ENCODE measurements at regions of chr2 and their contacts with region 1.

Region 1: GRCh38 chr2:189092936-189093335 is 86.6 kb downstream of the COL5A2 start:
- DNase-seq: no peak
- H3K4me3 Mint-ChIP-seq: no peak overlapping the region
- H3K27ac Mint-ChIP-seq: no peak overlapping the region
- H3K4me1 Mint-ChIP-seq: peaks cover 10% of the 10 kb centered on the region
- H3K27me3 Mint-ChIP-seq: no peaks in the 10 kb centered on the region

Region 2: DNA sequence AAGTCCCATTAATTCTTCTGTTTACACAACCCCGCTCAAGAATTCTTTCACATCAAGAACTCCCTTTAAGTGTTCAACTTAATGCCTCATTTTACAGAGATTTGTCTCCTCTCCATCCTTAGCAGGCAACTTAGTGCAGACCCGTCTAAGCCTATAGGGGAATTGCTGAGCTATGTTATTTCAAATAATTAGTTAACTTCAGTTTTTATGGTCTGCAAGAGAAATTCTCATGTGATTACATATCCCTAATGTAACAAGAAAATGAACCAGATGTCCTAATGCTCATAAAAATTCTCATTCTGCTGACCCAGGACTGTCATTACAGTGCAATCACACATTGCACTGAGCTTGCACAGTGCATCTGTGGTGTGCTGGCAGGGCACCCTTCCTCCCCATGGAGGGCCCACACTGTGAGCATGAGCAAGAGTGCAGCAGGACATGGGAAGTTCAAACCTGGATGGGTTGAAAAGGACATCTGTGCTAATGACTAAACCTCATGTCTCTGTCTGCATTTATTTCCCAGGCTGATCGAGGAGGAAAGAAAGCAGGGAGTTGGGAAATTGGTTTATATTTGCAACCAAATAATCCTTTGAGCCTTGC is 10.5 kb before region 1 on chr2:
- CTCF ChIA-PET with region 1: interaction called, 11 read pairs
- POLR2A ChIA-PET with region 1: no interaction called
- DNase-seq: no peak
- H3K4me3 Mint-ChIP-seq: no peak overlapping the region
- H3K27ac Mint-ChIP-seq: no peak overlapping the region
- H3K4me1 Mint-ChIP-seq: no peaks in the 10 kb centered on the region
- H3K27me3 Mint-ChIP-seq: no peaks in the 10 kb centered on the region

Region 3: GRCh38 chr2:189138800-189139199 is 45.9 kb after region 1 on chr2:
- CTCF ChIA-PET with region 1: no interaction called
- POLR2A ChIA-PET with region 1: no interaction called
- DNase-seq: no peak
- H3K4me3 Mint-ChIP-seq: no peak overlapping the region
- H3K27ac Mint-ChIP-seq: no peak overlapping the region
- H3K4me1 Mint-ChIP-seq: no peaks in the 10 kb centered on the region
- H3K27me3 Mint-ChIP-seq: no peaks in the 10 kb centered on the region

Region 4: DNA sequence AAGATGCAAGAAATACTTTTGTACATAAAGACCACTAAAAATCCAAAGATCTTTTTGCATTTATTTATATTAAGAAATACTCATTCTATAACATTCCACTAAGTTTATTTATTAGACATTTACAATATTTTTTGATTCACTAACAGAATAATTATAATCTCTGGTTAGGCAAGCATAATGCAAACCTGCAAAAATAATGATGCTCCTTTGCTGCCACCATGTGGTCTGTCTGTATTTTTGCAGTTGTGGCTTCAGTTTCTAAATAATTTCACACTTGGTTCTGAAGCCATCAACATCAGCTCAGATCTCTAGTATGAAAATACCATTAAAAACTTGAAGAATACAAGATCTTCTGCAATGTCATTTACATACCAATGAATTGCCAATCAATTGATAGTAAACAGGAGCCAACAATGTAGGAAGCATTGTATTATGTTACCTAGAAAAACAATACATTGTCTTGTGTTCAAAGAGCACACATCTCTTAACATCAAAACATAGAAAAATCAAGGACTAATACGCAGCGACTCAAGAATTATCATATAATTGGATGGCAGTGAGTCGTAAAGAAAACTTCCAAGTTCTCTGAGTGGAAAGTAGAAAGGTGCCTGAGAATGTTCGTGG is 319.5 kb after region 1 on chr2:
- CTCF ChIA-PET with region 1: interaction called, 12 read pairs
- POLR2A ChIA-PET with region 1: no interaction called
- DNase-seq: peak; percentile 50
- H3K4me3 Mint-ChIP-seq: no peak overlapping the region
- H3K27ac Mint-ChIP-seq: no peak overlapping the region
- H3K4me1 Mint-ChIP-seq: peaks cover 8% of the 10 kb centered on the region
- H3K27me3 Mint-ChIP-seq: no peaks in the 10 kb centered on the region

Measured in activated CD4-positive, alpha-beta memory T cell treated with anti-CD3 and anti-CD28 coated beads, Interleukin-2, amount 10 ng/mL, durations not matched to agents 7 days and 5 days (primary cell).